Breast epithelium (tissue), 4 donors: ENCODE measurements at regions of chr12 and their contacts with region 1.

Region 1: GRCh38 chr12:1332327-1332726 is 262.1 kb downstream of the FBXL14 start:
- DNase-seq: no peak
- H3K4me3 ChIP-seq: no peak overlapping the region
- H3K27ac ChIP-seq: no peak overlapping the region
- H3K4me1 ChIP-seq: no peaks in the 10 kb centered on the region
- H3K27me3 ChIP-seq: no peaks in the 10 kb centered on the region
- CTCF ChIP-seq: no peak
- POLR2A ChIP-seq: no peak

Region 2: DNA sequence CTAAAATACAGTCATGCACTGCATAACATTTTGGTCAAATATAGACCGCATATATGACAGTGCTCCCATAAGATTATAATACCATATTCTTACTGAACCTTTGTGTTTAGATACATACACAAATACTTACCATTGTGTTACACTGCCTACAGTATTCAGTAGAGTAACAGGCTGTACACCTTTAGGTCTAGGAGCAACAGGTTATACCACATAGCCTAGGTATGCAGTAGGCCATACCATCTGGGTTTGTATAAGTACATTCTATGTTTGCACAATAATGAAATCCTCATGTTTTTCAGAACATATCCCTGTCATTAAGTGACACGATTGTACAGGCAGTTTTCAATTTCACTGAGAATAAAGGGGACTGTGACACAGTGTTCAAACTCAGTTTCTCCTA is 965.5 kb before region 1 on chr12:
- intact Hi-C with region 1: loop called (anchors 10 kb)
- DNase-seq: no peak
- H3K4me3 ChIP-seq: no peak overlapping the region
- H3K27ac ChIP-seq: no peak overlapping the region
- H3K4me1 ChIP-seq: no peaks in the 10 kb centered on the region
- H3K27me3 ChIP-seq: no peaks in the 10 kb centered on the region
- CTCF ChIP-seq: no peak
- POLR2A ChIP-seq: no peak

Region 3: DNA sequence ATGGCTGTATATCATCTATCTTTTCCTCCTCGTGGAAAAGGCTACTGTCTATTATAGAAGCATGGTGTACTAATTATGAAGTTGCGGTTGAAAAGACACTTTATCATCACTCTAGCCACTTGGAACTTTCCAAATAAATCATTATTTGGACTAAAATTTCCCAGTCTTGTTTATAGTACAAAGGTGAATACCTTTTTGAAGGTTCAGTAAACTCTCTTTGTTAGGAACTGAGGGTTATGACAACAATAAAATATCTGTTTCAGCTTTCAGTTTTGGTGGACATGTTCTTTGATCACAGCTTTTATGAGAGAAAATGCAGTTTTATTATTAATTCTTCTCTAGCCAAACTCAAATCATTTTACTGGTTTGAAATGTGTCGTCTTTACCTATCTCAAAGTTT is 45.4 kb after region 1 on chr12:
- intact Hi-C with region 1: loop called (anchors 2 kb)
- DNase-seq: no peak
- H3K4me3 ChIP-seq: no peak overlapping the region
- H3K27ac ChIP-seq: no peak overlapping the region
- H3K4me1 ChIP-seq: no peaks in the 10 kb centered on the region
- H3K27me3 ChIP-seq: no peaks in the 10 kb centered on the region
- CTCF ChIP-seq: no peak
- POLR2A ChIP-seq: no peak